ENCODE measurements at regions of chr2 and their contacts with region 1.

Region 1: GRCh38 chr2:231489990-231490389 is 25.7 kb upstream of the NCL start:
- DNase-seq: peak; percentile 61
- ATAC-seq: no peak
- H3K4me3 Mint-ChIP-seq: no peak overlapping the region
- H3K27ac Mint-ChIP-seq: no peak overlapping the region
- H3K4me1 Mint-ChIP-seq: peaks cover under 1% of the 10 kb centered on the region
- H3K27me3 Mint-ChIP-seq: no peaks in the 10 kb centered on the region
- CTCF ChIP-seq: peak; percentile 37

Region 2: GRCh38 chr2:231450548-231450989 is 39.4 kb before region 1 on chr2:
- CTCF ChIA-PET with region 1: no interaction called
- POLR2A ChIA-PET with region 1: no interaction called
- intact Hi-C with region 1: no loop called
- DNase-seq: no peak
- ATAC-seq: no peak
- H3K4me3 Mint-ChIP-seq: no peak overlapping the region
- H3K27ac Mint-ChIP-seq: no peak overlapping the region
- H3K4me1 Mint-ChIP-seq: peaks cover 11% of the 10 kb centered on the region
- H3K27me3 Mint-ChIP-seq: no peaks in the 10 kb centered on the region
- CTCF ChIP-seq: no peak

Region 3: DNA sequence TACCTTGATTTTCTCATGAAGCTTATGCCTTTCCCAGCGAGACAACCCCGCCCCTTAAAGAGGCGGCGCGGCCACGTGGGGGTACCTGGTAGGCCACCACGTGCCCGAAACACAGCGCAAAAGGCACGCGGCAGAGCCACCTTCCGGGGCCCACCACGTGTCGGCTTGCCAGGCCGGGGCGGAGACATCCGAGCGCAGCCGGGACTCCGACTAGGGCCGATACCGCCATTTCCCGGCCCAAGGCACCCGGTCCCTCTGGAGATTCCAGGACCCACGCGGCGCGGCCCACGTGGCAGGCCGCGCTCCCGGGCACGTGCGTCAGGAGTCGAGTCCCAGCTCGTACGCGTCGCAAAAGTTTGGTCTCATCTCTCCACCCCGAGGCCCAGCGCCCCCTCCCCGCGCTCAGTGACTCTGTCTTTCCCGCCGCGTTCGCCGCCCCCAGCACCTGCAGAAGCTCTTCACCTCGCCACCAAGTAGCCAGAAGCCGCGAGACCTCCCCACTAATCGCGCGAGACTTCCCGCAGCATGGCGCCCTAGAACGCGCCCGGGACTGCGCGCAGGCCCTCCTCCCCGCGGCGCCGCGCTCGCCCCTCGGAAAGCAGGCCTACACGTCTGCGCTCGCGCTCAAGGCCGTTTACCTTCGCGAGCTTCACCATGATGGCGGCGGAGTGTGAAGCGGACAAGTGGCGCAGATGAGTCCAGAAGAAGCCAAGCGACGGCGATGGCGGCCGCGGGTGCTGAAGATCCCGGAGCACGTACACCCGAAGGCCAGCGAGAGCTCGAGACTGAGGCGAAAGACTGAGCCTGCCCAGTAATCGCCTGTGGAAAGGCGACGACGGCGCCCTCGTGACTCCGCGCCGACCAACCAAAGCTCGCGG is 26.1 kb before region 1 on chr2 and contains the start of gene NCL:
- CTCF ChIA-PET with region 1: interaction called, 4 read pairs
- POLR2A ChIA-PET with region 1: interaction called, 10 read pairs
- intact Hi-C with region 1: no loop called
- DNase-seq: peak; percentile 89
- ATAC-seq: peak; percentile 47
- H3K4me3 Mint-ChIP-seq: peak within 1 kb of the TSS; percentile 100
- H3K27ac Mint-ChIP-seq: peak within 1 kb of the TSS; percentile 98
- H3K4me1 Mint-ChIP-seq: peaks cover 38% of the 10 kb centered on the region
- H3K27me3 Mint-ChIP-seq: no peaks in the 10 kb centered on the region
- CTCF ChIP-seq: no peak
- total RNA-seq, gene NCL: 1,312 to 1,361 TPM

Region 4: DNA sequence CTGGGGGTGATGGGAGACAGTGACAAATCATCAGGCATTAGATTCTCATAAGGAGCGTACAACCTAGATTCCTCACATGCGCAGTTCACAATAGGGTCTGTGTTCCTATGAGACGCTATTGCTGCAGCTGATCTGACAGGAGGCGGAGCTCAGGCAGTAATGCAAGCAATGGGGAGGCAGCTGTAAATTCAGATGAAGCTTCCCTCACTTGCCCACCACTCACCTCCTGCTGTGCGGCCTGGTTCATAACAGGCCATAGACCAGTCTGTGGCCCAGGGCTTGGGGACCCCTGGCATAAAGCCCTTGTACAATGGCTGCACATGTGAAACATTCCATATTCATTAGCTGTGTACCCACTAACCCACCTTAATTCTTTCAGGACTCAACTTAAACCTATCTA is 22.2 kb after region 1 on chr2:
- CTCF ChIA-PET with region 1: no interaction called
- POLR2A ChIA-PET with region 1: no interaction called
- intact Hi-C with region 1: no loop called
- DNase-seq: no peak
- ATAC-seq: no peak
- H3K4me3 Mint-ChIP-seq: peak overlapping the region; percentile 12
- H3K27ac Mint-ChIP-seq: no peak overlapping the region
- H3K4me1 Mint-ChIP-seq: peaks cover 17% of the 10 kb centered on the region
- H3K27me3 Mint-ChIP-seq: no peaks in the 10 kb centered on the region
- CTCF ChIP-seq: no peak